Activated CD8-positive, alpha-beta T cell treated with anti-CD3 and anti-CD28 coated beads for 36 hours (primary cell): ENCODE measurements at regions of chr21 and their contacts with region 1.

Region 1: GRCh38 chr21:33947451-33948095 is 32.0 kb upstream of the ATP5PO start:
- DNase-seq: peak; percentile 94
- ATAC-seq: peak; percentile 57
- H3K4me3 Mint-ChIP-seq: peak overlapping the region; percentile 75
- H3K27ac Mint-ChIP-seq: peak overlapping the region; percentile 100
- H3K4me1 Mint-ChIP-seq: peaks cover 75% of the 10 kb centered on the region
- H3K27me3 Mint-ChIP-seq: peaks cover 3% of the 10 kb centered on the region
- CTCF ChIP-seq: no peak

Region 2: GRCh38 chr21:33811167-33812010 is 136.2 kb before region 1 on chr21:
- CTCF ChIA-PET with region 1: no interaction called
- POLR2A ChIA-PET with region 1: no interaction called
- intact Hi-C with region 1: no loop called
- DNase-seq: no peak
- ATAC-seq: no peak
- H3K4me3 Mint-ChIP-seq: no peak overlapping the region
- H3K27ac Mint-ChIP-seq: no peak overlapping the region
- H3K4me1 Mint-ChIP-seq: no peaks in the 10 kb centered on the region
- H3K27me3 Mint-ChIP-seq: no peaks in the 10 kb centered on the region
- CTCF ChIP-seq: no peak

Region 3: DNA sequence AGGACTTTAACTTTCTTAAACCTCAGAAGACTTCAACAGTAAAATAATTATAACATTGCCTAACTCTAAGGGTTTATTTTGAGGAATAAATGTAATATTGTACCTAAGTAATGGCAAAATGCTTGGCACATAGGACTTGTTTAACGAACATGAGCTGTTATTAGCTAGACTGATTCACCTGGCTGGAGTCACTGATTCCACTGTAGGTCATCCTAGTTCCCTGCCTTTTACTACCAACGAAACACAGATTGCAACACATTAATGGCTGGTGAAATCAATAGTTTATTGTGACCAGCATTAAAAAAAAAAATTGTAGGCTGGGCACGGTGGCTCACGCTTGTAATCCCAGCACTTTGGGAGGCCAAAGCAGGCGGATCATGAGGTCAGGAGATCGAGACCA is 13.5 kb after region 1 on chr21:
- CTCF ChIA-PET with region 1: interaction called, 4 read pairs
- POLR2A ChIA-PET with region 1: interaction called, 28 read pairs
- intact Hi-C with region 1: no loop called
- DNase-seq: no peak
- ATAC-seq: no peak
- H3K4me3 Mint-ChIP-seq: no peak overlapping the region
- H3K27ac Mint-ChIP-seq: no peak overlapping the region
- H3K4me1 Mint-ChIP-seq: peaks cover 19% of the 10 kb centered on the region
- H3K27me3 Mint-ChIP-seq: no peaks in the 10 kb centered on the region
- CTCF ChIP-seq: no peak

Region 4: DNA sequence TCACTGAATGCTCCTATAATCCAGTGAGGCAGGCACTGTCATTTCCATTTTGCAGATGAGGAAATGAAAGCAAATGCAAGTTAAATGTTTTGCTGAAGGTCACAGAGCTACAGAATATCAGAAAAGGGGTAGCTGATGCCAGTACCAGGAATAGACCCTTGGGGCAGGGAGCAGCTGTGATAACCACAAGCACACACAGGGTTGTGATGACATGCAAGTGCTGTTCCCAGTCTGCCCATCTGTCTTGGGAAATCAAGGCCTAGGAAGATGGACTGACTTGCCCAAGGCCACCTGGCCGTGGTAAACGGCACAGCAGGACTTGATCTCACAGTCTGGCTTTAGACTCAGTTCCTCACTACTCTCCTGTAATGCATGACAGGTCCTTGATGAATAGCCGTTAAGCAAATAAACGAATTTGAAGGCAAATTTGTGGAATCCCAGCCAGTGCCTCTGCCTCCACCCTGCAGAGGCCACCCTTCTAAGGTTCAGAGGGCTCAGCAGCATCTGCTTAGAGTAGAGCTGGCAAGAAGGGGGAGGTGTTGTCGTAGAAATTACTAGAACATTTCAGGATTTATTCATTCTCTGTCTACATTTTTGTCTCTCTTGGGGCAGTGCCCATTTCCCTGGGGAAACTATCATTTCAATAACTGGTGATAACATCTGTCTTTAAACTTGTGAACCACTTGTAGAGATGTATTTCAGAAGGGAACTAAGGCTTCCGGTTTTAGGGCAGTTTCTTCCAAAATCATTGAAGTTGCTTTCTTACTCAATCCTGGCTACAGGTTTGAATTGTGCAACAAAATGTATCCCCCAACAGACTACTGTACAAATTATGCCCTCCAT is 72.7 kb after region 1 on chr21:
- CTCF ChIA-PET with region 1: no interaction called
- POLR2A ChIA-PET with region 1: interaction called, 8 read pairs
- intact Hi-C with region 1: loop called (anchors 5 kb)
- DNase-seq: no peak
- ATAC-seq: no peak
- H3K4me3 Mint-ChIP-seq: no peak overlapping the region
- H3K27ac Mint-ChIP-seq: peak overlapping the region; percentile 2
- H3K4me1 Mint-ChIP-seq: peaks cover 23% of the 10 kb centered on the region
- H3K27me3 Mint-ChIP-seq: no peaks in the 10 kb centered on the region
- CTCF ChIP-seq: no peak

Region 5: GRCh38 chr21:34078915-34079314 is 131.3 kb after region 1 on chr21:
- CTCF ChIA-PET with region 1: interaction called, 6 read pairs
- POLR2A ChIA-PET with region 1: interaction called, 12 read pairs
- intact Hi-C with region 1: loop called (anchors 5 kb)
- DNase-seq: peak; percentile 62
- ATAC-seq: peak; percentile 15
- H3K4me3 Mint-ChIP-seq: peak overlapping the region; percentile 65
- H3K27ac Mint-ChIP-seq: peak overlapping the region; percentile 92
- H3K4me1 Mint-ChIP-seq: peaks cover 88% of the 10 kb centered on the region
- H3K27me3 Mint-ChIP-seq: no peaks in the 10 kb centered on the region
- CTCF ChIP-seq: no peak